Breast epithelium (tissue), 4 donors: ENCODE measurements at regions of chr17 and their contacts with region 1.

Region 1: GRCh38 chr17:2786176-2786881 is 9.9 kb upstream of the RAP1GAP2 start:
- DNase-seq: peak; percentile 30 to 64
- H3K4me3 ChIP-seq: peak overlapping the region in 1 of 3 donors; percentile 3
- H3K27ac ChIP-seq: no peak overlapping the region
- H3K4me1 ChIP-seq: no peaks in the 10 kb centered on the region
- H3K27me3 ChIP-seq: no peaks in the 10 kb centered on the region
- CTCF ChIP-seq: peak in 2 of 3 donors; percentile 13 to 45
- POLR2A ChIP-seq: no peak

Region 2: GRCh38 chr17:3400055-3400454 is 613.7 kb after region 1 on chr17:
- intact Hi-C with region 1: loop called (anchors 10 kb)
- DNase-seq: no peak
- H3K4me3 ChIP-seq: no peak overlapping the region
- H3K27ac ChIP-seq: no peak overlapping the region
- H3K4me1 ChIP-seq: no peaks in the 10 kb centered on the region
- H3K27me3 ChIP-seq: no peaks in the 10 kb centered on the region
- CTCF ChIP-seq: no peak
- POLR2A ChIP-seq: no peak

Region 3: GRCh38 chr17:4232168-4232813 is 1446.0 kb after region 1 on chr17:
- intact Hi-C with region 1: no loop called
- DNase-seq: no peak
- H3K4me3 ChIP-seq: no peak overlapping the region
- H3K27ac ChIP-seq: peak overlapping the region; percentile 76 to 83
- H3K4me1 ChIP-seq: peaks cover 8 to 9% of the 10 kb centered on the region in 2 donors
- H3K27me3 ChIP-seq: no peaks in the 10 kb centered on the region
- CTCF ChIP-seq: no peak
- POLR2A ChIP-seq: no peak